A549 (cell line): ENCODE measurements at regions of chr2 and their contacts with region 1.

Region 1: DNA sequence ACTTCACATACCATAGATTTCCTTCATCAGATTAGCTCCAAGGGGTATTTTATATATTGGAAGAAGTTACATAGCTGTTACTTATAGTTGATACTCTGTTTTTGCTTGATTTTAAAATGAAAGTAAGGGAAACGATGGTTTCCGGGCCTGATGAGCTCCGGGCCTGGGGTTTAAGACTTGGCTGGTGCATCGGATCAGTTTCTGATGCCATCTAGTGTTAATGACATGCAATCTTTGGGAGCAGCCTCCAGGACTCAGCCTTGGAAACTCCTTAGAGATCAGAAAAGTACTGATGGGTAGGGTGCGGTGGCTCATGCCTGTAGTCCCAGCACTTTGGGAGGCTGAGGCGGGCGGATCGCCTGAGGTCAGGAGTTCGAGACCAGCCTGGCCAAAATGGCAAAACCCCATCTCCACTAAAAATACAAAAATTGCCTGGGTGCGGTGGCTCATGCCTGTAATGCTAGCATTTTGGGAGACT is 47.1 kb upstream of the CNOT11 start:
- DNase-seq: peak; percentile 59 to 93
- ATAC-seq: peak; percentile 97 to 99
- H3K4me3 ChIP-seq: peak overlapping the region; percentile 30; the same call in 2 of the 3 replicates
- H3K27ac ChIP-seq: peak overlapping the region; percentile 80 to 86
- H3K4me1 ChIP-seq: peaks cover 11% of the 10 kb centered on the region
- CTCF ChIP-seq: peak; percentile 70
- EP300 ChIP-seq: no peak
- POLR2A ChIP-seq: no peak
- RAD21 ChIP-seq: peak; percentile 86

Region 2: DNA sequence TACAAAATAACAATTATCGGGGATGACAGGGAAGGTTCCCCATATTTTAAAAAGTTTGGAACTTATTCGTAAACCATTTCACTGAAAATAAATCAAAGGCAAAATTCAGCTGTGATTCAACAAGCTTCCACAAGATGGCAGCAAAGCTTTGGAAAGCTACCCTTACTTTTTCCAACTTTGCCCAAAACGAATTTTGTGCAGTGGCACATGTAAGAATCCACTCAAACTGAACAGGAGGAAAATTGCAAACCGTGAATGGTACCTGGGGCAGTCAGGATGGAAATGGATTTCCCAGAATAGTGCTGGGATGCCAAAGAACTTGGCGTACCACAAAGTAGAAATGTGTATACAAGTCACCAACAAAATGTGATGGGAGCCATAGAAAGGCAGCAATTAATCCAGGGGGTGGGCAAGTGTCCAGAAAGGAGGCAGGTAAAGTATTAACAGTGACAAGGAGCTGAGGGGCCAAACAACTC is 192.8 kb before region 1 on chr2:
- CTCF ChIA-PET with region 1: interaction called, 70 read pairs
- POLR2A ChIA-PET with region 1: interaction called, 4 read pairs
- DNase-seq: peak in 1 of 2 experiments; percentile 52
- ATAC-seq: peak in 1 of 2 experiments; percentile 31; a peak in 1 of 6 replicates
- H3K4me3 ChIP-seq: no peak overlapping the region
- H3K27ac ChIP-seq: peak overlapping the region; percentile 5 to 46; a peak in 1 of 6 replicates
- H3K4me1 ChIP-seq: peaks cover 9% of the 10 kb centered on the region; the same call in 2 of the 3 replicates
- CTCF ChIP-seq: peak; percentile 88
- EP300 ChIP-seq: no peak
- POLR2A ChIP-seq: no peak
- RAD21 ChIP-seq: peak; percentile 87 to 92

Region 3: GRCh38 chr2:101036562-101037457 is 168.8 kb before region 1 on chr2:
- CTCF ChIA-PET with region 1: interaction called, 38 read pairs
- POLR2A ChIA-PET with region 1: no interaction called
- DNase-seq: no peak
- ATAC-seq: 0 out of 6 replicates have a peak, but pooled peaks of 1 of the 2 experiments have one; percentile 13
- H3K4me3 ChIP-seq: no peak overlapping the region
- H3K27ac ChIP-seq: peak overlapping the region; percentile 58 to 80
- H3K4me1 ChIP-seq: peaks cover 27% of the 10 kb centered on the region; the same call in 2 of the 3 replicates
- CTCF ChIP-seq: peak; percentile 59
- EP300 ChIP-seq: no peak
- POLR2A ChIP-seq: no peak
- RAD21 ChIP-seq: peak; percentile 75 to 80

Region 4: GRCh38 chr2:101188683-101189405 is 16.7 kb before region 1 on chr2:
- CTCF ChIA-PET with region 1: interaction called, 96 read pairs
- POLR2A ChIA-PET with region 1: no interaction called
- DNase-seq: peak; percentile 38 to 48
- ATAC-seq: peak; percentile 70 to 95; a peak in 4 of 6 replicates
- H3K4me3 ChIP-seq: no peak overlapping the region
- H3K27ac ChIP-seq: no peak overlapping the region
- H3K4me1 ChIP-seq: 0 out of 3 replicates have a peak, but pooled peaks cover 3% of the 10 kb centered on the region
- CTCF ChIP-seq: peak; percentile 35
- EP300 ChIP-seq: no peak
- POLR2A ChIP-seq: no peak
- RAD21 ChIP-seq: peak in 1 of 2 experiments; percentile 51; a peak in 2 of 5 replicates

Region 5: DNA sequence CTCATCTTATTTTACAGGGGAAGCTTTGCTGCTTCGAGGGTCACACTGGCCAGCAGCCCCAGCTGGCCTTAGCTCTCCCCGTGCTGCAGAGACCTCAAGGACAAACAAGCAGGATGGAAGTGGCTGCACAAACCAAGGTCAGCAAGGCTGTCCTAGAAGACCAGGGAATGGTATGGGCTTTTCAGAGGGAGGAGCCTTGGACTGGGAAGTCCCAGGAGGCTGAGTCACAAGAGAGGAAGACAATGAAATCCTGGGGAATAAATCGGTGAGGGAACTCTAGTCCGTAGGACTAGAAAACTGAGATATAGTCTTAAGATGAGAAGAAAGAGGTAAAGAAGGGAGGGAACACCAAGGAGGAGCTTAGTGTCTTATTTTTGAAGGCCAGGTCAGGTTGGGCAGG is 166.1 kb after region 1 on chr2:
- CTCF ChIA-PET with region 1: no interaction called
- POLR2A ChIA-PET with region 1: no interaction called
- DNase-seq: no peak
- ATAC-seq: no peak
- H3K4me3 ChIP-seq: no peak overlapping the region
- H3K27ac ChIP-seq: no peak overlapping the region
- H3K4me1 ChIP-seq: no peaks in the 10 kb centered on the region
- CTCF ChIP-seq: no peak
- EP300 ChIP-seq: no peak
- POLR2A ChIP-seq: no peak
- RAD21 ChIP-seq: no peak

Region 6: DNA sequence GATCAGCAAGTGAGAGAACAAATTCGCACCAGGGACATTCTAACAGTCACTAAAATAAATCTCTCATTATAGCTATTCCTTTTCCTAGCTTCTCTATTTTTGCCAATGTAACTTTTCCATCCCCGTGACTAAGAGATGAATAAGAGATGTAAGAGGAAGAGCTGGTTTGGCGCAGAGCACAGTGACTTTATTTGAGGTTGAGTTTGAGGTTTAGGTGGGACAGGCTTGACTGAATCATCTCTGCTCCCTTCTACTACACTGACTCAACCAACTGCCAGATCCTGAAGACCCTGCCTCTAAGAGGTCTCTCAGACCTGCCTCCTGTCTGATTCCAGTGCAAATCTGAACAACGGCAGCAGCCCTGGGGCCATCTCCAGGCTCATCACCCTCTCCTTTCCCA is 241.3 kb after region 1 on chr2:
- CTCF ChIA-PET with region 1: no interaction called
- POLR2A ChIA-PET with region 1: no interaction called
- DNase-seq: no peak
- ATAC-seq: no peak
- H3K4me3 ChIP-seq: no peak overlapping the region
- H3K27ac ChIP-seq: no peak overlapping the region
- H3K4me1 ChIP-seq: no peaks in the 10 kb centered on the region
- CTCF ChIP-seq: no peak
- EP300 ChIP-seq: no peak
- POLR2A ChIP-seq: no peak
- RAD21 ChIP-seq: no peak